ENCODE measurements at regions of chr19 and their contacts with region 1.

Region 1: GRCh38 chr19:46954993-46955812 is 64.4 kb upstream of the NPAS1 start:
- DNase-seq: no peak
- H3K4me3 ChIP-seq: no peak overlapping the region
- H3K27ac ChIP-seq: no peak overlapping the region
- H3K4me1 ChIP-seq: peaks cover 25% of the 10 kb centered on the region
- H3K27me3 ChIP-seq: no peaks in the 10 kb centered on the region
- CTCF ChIP-seq: no peak

Region 2: GRCh38 chr19:46919324-46919723 is 35.9 kb before region 1 on chr19:
- CTCF ChIA-PET with region 1: no interaction called
- dilution Hi-C with region 1: no loop called
- in situ Hi-C with region 1: no loop called
- intact Hi-C with region 1: loop called (anchors 5 kb)
- DNase-seq: peak; percentile 60
- H3K4me3 ChIP-seq: no peak overlapping the region
- H3K27ac ChIP-seq: no peak overlapping the region
- H3K4me1 ChIP-seq: peaks cover 10% of the 10 kb centered on the region
- H3K27me3 ChIP-seq: no peaks in the 10 kb centered on the region
- CTCF ChIP-seq: no peak

Measured in mammary epithelial cell (primary cell).